ENCODE measurements at regions of chr6 and their contacts with region 1.

Region 1: GRCh38 chr6:144095331-144096002 is at the start of gene SF3B5:
- H3K4me3 Mint-ChIP-seq: peak within 1 kb of the TSS; percentile 92
- H3K27ac Mint-ChIP-seq: peak within 1 kb of the TSS; percentile 95
- H3K4me1 Mint-ChIP-seq: peaks cover 22% of the 10 kb centered on the region
- H3K27me3 Mint-ChIP-seq: no peaks in the 10 kb centered on the region

Region 2: GRCh38 chr6:143575440-143575839 is 520.0 kb before region 1 on chr6:
- intact Hi-C with region 1: loop called (anchors 1 kb)
- H3K4me3 Mint-ChIP-seq: no peak overlapping the region
- H3K27ac Mint-ChIP-seq: no peak overlapping the region
- H3K4me1 Mint-ChIP-seq: peaks cover 26% of the 10 kb centered on the region
- H3K27me3 Mint-ChIP-seq: no peaks in the 10 kb centered on the region

Region 3: GRCh38 chr6:143842902-143843676 is 252.4 kb before region 1 on chr6 and contains the start of gene LTV1:
- intact Hi-C with region 1: loop called (anchors 10 kb)
- H3K4me3 Mint-ChIP-seq: peak within 1 kb of the TSS; percentile 91
- H3K27ac Mint-ChIP-seq: peak within 1 kb of the TSS; percentile 95
- H3K4me1 Mint-ChIP-seq: peaks cover 16% of the 10 kb centered on the region
- H3K27me3 Mint-ChIP-seq: no peaks in the 10 kb centered on the region

Region 4: GRCh38 chr6:144063744-144064401 is 31.6 kb before region 1 on chr6:
- intact Hi-C with region 1: loop called (anchors 2 kb)
- H3K4me3 Mint-ChIP-seq: peak overlapping the region; percentile 79
- H3K27ac Mint-ChIP-seq: peak overlapping the region; percentile 84
- H3K4me1 Mint-ChIP-seq: peaks cover 64% of the 10 kb centered on the region
- H3K27me3 Mint-ChIP-seq: peaks cover 5% of the 10 kb centered on the region

Region 5: GRCh38 chr6:144162977-144163376 is 67.5 kb after region 1 on chr6:
- intact Hi-C with region 1: loop called (anchors 5 kb)
- H3K4me3 Mint-ChIP-seq: no peak overlapping the region
- H3K27ac Mint-ChIP-seq: peak overlapping the region; percentile 34
- H3K4me1 Mint-ChIP-seq: peaks cover 48% of the 10 kb centered on the region
- H3K27me3 Mint-ChIP-seq: no peaks in the 10 kb centered on the region

Region 6: DNA sequence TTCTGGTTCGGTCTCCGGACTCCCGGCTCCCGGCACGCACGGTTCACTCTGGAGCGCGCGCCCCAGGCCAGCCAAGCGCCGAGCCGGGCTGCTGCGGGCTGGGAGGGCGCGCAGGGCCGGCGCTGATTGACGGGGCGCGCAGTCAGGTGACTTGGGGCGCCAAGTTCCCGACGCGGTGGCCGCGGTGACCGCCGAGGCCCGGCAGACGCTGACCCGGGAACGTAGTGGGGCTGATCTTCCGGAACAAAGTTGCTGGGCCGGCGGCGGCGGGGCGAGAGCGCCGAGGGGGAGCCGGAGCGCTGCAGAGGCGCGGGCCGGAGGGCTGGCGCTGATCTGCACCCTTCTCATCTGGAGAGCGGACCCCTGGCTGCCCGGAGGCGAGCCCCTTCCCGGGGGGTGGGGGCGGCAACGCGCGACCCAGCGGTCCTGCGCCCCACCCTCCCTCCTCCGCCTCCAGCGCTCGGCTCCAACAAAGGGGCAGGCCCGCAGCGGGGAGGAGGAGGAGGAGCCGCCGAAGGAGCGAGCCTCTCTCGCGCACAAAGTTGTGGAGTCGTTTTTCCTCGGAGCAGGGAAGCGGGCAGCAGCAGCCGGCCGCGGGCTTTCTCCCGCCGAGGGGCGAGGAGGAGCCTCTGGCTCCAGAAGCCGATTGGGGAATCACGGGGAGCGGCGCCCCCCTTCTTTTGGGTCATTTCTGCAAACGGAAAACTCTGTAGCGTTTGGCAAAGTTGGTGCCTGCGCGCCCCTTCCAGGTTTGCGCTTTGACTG is 189.5 kb after region 1 on chr6 and contains the start of gene UTRN:
- intact Hi-C with region 1: loop called (anchors 2 kb)
- H3K4me3 Mint-ChIP-seq: peak within 1 kb of the TSS; percentile 95
- H3K27ac Mint-ChIP-seq: peak within 1 kb of the TSS; percentile 94
- H3K4me1 Mint-ChIP-seq: peaks cover 28% of the 10 kb centered on the region
- H3K27me3 Mint-ChIP-seq: no peaks in the 10 kb centered on the region

Measured in dendritic cell treated with granulocyte-macrophage colony-stimulating factor and Interleukin-4, amounts not matched to agents 40 ng/mL and 50 ng/mL, for 4 days (primary cell).